ENCODE measurements at regions of chrX and their contacts with region 1.

Region 1: GRCh38 chrX:46642145-46642544 is 68.6 kb downstream of the CHST7 start:
- DNase-seq: no peak
- H3K4me3 Mint-ChIP-seq: no peak overlapping the region
- H3K27ac Mint-ChIP-seq: no peak overlapping the region
- H3K4me1 Mint-ChIP-seq: peaks cover 32% of the 10 kb centered on the region
- H3K27me3 Mint-ChIP-seq: no peaks in the 10 kb centered on the region

Region 2: DNA sequence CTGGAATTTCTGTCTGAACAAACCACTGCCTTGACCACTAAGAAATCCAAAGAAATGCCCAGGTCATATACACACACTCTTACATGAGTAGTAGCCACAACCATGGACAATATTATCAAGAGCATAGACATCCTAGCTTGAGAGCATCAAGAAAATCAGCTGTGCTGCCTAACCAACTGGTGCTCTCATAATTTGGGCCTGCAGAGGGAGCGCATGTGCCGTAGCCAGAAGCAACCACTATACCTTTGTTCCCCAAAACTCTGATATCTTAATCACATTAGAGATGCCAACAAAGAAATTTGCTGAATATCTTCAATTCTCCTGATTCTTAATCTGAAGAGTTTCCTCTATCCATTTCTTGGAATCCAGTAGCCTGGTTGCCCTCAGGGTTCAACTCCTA is 260.5 kb before region 1 on chrX:
- intact Hi-C with region 1: loop called (anchors 10 kb)
- DNase-seq: peak; percentile 0
- H3K4me3 Mint-ChIP-seq: no peak overlapping the region
- H3K27ac Mint-ChIP-seq: no peak overlapping the region
- H3K4me1 Mint-ChIP-seq: no peaks in the 10 kb centered on the region
- H3K27me3 Mint-ChIP-seq: peaks cover 3% of the 10 kb centered on the region

Region 3: DNA sequence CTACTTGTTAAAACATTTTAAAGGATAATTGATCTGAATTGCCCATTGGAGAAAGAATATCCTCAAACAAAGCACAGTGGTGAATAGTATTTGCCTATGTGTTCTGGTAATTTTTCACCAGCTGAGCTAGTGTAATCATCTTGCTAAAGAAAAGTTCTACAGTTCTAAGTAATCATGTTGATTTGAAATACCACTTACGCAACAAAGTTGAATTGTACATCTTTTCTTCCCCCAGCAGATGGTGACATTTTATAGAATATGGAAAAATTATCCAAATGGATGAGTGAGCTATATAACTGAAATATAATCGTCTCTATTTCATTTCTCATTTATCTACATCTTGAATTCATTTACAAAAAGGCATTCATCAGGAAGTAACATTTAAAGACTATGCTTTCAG is 87.2 kb before region 1 on chrX:
- intact Hi-C with region 1: loop called (anchors 1 kb)
- DNase-seq: no peak
- H3K4me3 Mint-ChIP-seq: no peak overlapping the region
- H3K27ac Mint-ChIP-seq: no peak overlapping the region
- H3K4me1 Mint-ChIP-seq: no peaks in the 10 kb centered on the region
- H3K27me3 Mint-ChIP-seq: no peaks in the 10 kb centered on the region

Measured in activated T-helper 1 cell treated with anti-CD3 and anti-CD28 coated beads, Interleukin-12 subunit alpha, Interleukin-12 subunit beta, Interleukin-2, Interleukin-4 antibody, amounts not matched to agents 30 ng/mL and 10 ng/mL and 1 ng/mL, durations not matched to agents 14 hours and 24 hours and 36 hours (primary cell).